Ascending aorta (tissue), 2 donors: ENCODE measurements at regions of chr20 and their contacts with region 1.

Region 1: DNA sequence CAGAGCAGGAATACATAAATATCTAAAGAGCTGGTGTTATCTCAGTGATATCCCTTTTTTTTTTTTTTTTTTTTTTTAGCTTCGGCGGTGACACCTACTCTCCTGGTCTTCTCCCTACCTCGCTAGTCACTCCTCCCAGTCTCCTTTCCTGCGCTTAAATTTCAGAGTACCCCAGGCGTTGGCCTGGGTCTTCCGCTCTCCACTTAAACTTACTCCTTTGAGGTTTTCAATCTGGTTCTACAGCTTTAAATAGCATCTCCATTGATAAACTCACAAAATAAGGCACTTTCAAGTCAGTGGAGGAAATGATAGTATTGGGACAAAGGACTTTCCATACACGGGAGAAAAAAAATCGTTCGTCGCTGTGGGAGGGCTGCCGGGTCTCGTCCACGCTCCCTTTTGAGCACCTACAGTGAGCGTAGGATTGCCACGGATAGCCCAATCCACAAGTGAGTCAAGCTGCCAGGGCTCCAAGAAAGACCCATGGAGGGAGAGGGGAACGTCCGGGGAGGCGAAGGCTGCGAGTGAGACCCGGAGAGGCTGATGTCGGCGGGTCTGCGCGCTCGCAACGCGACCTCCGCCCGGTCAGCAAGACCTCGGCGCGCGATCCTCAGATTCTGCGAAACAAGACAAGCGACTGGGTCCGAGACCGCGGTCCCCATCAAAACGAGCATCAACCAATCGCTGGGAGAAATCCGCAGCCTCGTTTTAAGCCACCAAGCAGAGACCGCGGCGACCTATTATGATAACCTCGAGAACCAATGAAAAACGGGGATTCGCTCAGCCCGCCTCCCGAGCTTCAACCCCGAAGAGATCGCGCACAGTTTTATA is 672 bp upstream of the SRSF6 start:
- DNase-seq: peak; percentile 78 to 96
- H3K4me3 ChIP-seq: peak overlapping the region; percentile 90 to 91
- H3K27ac ChIP-seq: peak overlapping the region; percentile 99 to 100
- H3K4me1 ChIP-seq: peaks cover 4 to 17% of the 10 kb centered on the region in 2 donors
- H3K27me3 ChIP-seq: no peaks in the 10 kb centered on the region
- CTCF ChIP-seq: no peak

Region 2: GRCh38 chr20:43220612-43221011 is 236.4 kb before region 1 on chr20:
- intact Hi-C with region 1: loop called (anchors 5 kb)
- DNase-seq: peak in 1 of 2 donors; percentile 74
- H3K4me3 ChIP-seq: no peak overlapping the region
- H3K27ac ChIP-seq: peak overlapping the region; percentile 48 to 76
- H3K4me1 ChIP-seq: peaks cover 0 to 29% of the 10 kb centered on the region in 2 donors
- H3K27me3 ChIP-seq: no peaks in the 10 kb centered on the region
- CTCF ChIP-seq: no peak

Region 3: GRCh38 chr20:43514062-43514999 is 57.3 kb after region 1 on chr20:
- intact Hi-C with region 1: loop called (anchors 1 kb)
- DNase-seq: peak; percentile 99
- H3K4me3 ChIP-seq: peak overlapping the region; percentile 53 to 73
- H3K27ac ChIP-seq: peak overlapping the region; percentile 66 to 77
- H3K4me1 ChIP-seq: no peaks in the 10 kb centered on the region
- H3K27me3 ChIP-seq: no peaks in the 10 kb centered on the region
- CTCF ChIP-seq: peak in 2 of 3 experiments; percentile 25 to 33

Region 4: DNA sequence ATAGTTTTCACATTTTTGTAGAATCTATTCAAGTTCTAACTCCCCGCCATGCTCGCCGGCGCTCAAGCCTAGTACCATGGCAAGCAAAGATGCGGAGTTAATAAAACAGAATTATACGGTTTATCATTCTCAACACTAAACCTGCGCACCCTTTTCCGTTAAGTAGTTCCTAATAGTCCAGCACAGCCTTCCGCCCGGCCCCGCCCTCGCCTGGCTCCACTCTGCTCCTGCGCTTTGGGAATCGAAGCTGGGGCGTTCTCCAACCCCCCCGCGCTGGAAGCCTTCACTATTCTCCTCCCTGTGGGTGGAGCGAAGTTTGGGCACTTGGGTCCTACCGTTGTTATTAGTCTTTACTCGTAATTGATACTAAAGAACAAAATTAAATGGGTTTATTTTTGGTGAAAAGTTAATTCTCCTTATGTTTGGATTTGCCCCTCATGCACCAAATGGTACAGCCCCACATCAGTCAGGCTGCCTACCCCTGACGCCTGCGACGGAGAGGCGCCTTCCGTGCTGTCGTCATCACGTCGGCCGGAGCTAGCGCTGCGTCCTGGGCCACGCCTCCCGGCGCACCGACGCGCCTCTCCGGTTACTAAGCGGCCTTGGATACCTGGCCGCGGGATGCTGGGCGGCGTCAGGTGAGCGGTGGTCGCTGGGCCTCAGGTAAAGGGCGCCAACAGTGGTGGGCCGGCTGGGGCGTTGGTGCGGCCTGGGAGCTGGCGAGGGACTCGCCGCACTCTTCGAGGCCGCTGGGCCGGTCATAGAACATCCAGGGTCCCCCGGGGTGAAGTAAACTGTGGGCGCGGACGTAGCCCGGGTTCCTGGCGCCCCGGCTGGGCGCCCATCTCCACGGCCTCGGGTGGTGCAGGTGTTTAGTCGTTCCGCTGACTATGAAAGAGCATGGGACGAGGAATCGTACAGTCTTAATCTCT is 133.6 kb after region 1 on chr20 and contains the start of gene IFT52:
- intact Hi-C with region 1: loop called (anchors 1 kb)
- DNase-seq: peak; percentile 81 to 95
- H3K4me3 ChIP-seq: peak within 1 kb of the TSS; percentile 87 to 93
- H3K27ac ChIP-seq: peak within 1 kb of the TSS; percentile 75 to 85
- H3K4me1 ChIP-seq: peaks cover 6 to 12% of the 10 kb centered on the region in 2 donors
- H3K27me3 ChIP-seq: no peaks in the 10 kb centered on the region
- CTCF ChIP-seq: no peak
- total RNA-seq, gene IFT52: 15.2 TPM

Region 5: GRCh38 chr20:43721429-43722152 is 264.6 kb after region 1 on chr20:
- intact Hi-C with region 1: no loop called
- DNase-seq: no peak
- H3K4me3 ChIP-seq: no peak overlapping the region
- H3K27ac ChIP-seq: no peak overlapping the region
- H3K4me1 ChIP-seq: no peaks in the 10 kb centered on the region
- H3K27me3 ChIP-seq: no peaks in the 10 kb centered on the region
- CTCF ChIP-seq: no peak